ENCODE measurements at regions of chr6 and their contacts with region 1.

Region 1: GRCh38 chr6:163338671-163339405 is 75.7 kb upstream of the QKI start:
- DNase-seq: peak; percentile 73 to 84
- ATAC-seq: peak; percentile 82 to 83
- H3K4me3 ChIP-seq: peak overlapping the region in 3 of 4 donors; percentile 10 to 16 (median 15)
- H3K27ac ChIP-seq: peak overlapping the region; percentile 92 to 99 (median 94)
- H3K4me1 ChIP-seq: peaks cover 65 to 69% of the 10 kb centered on the region in 2 donors
- H3K27me3 ChIP-seq: no peaks in the 10 kb centered on the region
- CTCF ChIP-seq: no peak
- POLR2A ChIP-seq: no peak

Region 2: DNA sequence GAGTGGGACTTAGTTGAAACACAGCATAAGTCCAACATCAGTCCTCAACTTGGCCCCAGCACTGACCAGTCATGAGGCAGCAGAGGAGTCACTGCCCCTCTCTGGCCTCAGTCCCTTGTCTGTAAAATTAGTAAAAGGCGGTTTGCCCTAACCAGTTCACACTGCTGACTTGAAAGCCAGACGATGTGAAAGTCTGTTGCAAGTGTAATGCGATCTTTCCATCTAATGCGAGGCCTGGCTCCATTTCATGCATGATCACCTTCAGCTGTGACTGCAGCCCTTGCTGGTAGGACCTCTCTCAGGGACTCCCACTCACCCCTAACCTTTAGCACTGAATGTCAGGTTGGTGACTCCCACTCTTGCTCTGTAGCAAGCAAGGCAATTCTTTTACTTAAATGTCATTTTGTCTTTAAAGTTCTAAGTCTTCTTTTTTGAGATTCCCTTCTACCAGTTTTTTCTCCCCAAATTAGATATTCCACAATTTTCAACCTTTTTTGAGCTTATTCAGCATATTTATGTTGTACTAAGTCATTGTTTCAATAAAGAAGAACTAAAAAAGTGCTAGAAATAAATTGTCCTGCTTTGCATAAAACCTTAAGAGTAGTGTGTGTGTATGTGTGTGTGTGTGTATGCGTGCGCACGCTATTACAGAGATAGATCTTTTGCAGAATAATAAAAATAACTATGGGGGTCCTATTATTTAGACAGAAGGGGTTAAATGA is 365.5 kb before region 1 on chr6:
- in situ Hi-C with region 1: no loop called
- intact Hi-C with region 1: loop called (anchors 5 kb)
- DNase-seq: peak; percentile 61 to 84
- ATAC-seq: peak; percentile 94 to 97
- H3K4me3 ChIP-seq: peak overlapping the region in 2 of 4 donors; percentile 9 to 19
- H3K27ac ChIP-seq: peak overlapping the region; percentile 63 to 83 (median 68)
- H3K4me1 ChIP-seq: peaks cover 24 to 33% of the 10 kb centered on the region in 2 donors
- H3K27me3 ChIP-seq: no peaks in the 10 kb centered on the region
- CTCF ChIP-seq: no peak
- POLR2A ChIP-seq: no peak

Region 3: DNA sequence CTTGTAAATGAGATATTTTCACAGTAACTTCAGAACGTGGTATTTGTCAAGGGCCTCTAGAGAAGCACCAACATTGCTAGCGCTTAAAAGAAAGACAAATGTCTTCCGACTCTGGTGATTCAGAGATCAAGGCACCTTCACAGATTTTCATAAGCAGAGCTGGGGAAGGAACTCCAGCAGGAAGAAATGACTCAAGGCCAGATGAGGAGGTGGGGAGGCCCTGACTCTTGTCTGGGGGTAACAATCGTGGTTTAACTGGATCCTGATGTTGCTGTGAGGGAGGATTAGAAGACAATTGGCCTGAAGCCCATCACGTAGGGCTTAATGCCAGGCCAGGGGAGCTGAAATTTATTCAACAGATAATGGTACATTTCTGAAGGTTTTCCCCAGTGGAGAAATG is 47.2 kb before region 1 on chr6:
- in situ Hi-C with region 1: no loop called
- intact Hi-C with region 1: loop called (anchors 2 kb)
- DNase-seq: no peak
- ATAC-seq: no peak
- H3K4me3 ChIP-seq: no peak overlapping the region
- H3K27ac ChIP-seq: peak overlapping the region; percentile 81 to 85 (median 84)
- H3K4me1 ChIP-seq: peaks cover 10 to 13% of the 10 kb centered on the region in 2 donors
- H3K27me3 ChIP-seq: no peaks in the 10 kb centered on the region
- CTCF ChIP-seq: no peak
- POLR2A ChIP-seq: no peak

Region 4: DNA sequence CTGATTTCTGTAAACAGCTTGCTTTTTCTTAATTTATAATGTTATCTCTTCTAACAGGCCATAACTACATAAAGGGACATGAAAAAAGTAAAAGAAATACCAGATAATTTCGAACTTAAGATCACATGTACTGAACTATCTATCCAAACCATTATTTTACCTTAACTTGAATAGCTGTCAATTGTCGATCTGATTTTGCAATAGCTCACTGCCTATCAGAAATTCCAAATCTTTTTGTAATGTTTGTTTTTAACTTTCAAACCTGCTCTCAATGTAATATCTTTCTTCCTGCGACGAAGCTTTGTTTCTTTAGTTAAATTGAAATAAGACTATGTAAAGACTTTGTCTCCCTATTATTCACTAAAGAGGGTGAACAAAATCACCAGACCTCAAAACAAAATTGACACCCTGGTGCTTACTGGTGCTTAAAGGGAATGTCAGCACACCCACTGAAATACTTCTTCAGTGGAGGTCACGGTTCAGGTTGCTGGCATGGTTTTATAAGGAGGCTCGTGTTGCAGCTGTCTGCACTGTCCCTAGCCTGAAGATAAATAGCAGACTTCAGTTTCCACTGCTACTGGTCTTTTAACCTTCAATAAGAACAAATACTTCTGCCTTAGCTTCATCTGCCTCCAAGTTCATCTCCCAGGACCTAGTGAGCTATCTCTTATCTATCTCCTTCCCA is 41.9 kb before region 1 on chr6:
- in situ Hi-C with region 1: no loop called
- intact Hi-C with region 1: loop called (anchors 2 kb)
- DNase-seq: peak; percentile 65 to 69
- ATAC-seq: peak; percentile 93 to 96
- H3K4me3 ChIP-seq: no peak overlapping the region
- H3K27ac ChIP-seq: peak overlapping the region; percentile 66 to 80 (median 72)
- H3K4me1 ChIP-seq: peaks cover 30 to 33% of the 10 kb centered on the region in 2 donors
- H3K27me3 ChIP-seq: no peaks in the 10 kb centered on the region
- CTCF ChIP-seq: no peak
- POLR2A ChIP-seq: no peak

Region 5: GRCh38 chr6:163926642-163927041 is 587.8 kb after region 1 on chr6:
- in situ Hi-C with region 1: no loop called
- intact Hi-C with region 1: no loop called
- DNase-seq: peak; percentile 27 to 46
- ATAC-seq: peak; percentile 36 to 43
- H3K4me3 ChIP-seq: no peak overlapping the region
- H3K27ac ChIP-seq: no peak overlapping the region
- H3K4me1 ChIP-seq: peaks cover 7 to 11% of the 10 kb centered on the region in 2 donors
- H3K27me3 ChIP-seq: no peaks in the 10 kb centered on the region
- CTCF ChIP-seq: no peak
- POLR2A ChIP-seq: no peak

Measured in gastrocnemius medialis (tissue), 4 donors.